Activated T-helper 2 cell treated with anti-CD3 and anti-CD28 coated beads, Interferon-gamma antibody, Interleukin-2, Interleukin-4, amounts not matched to agents 10 μg/mL and 5 μg/mL and 100 μg/mL, durations not matched to agents 14 hours and 24 hours and 36 hours (primary cell): ENCODE measurements at regions of chr16 and their contacts with region 1.

Region 1: GRCh38 chr16:14529010-14529669 is 100.9 kb downstream of the PARN start:
- DNase-seq: peak; percentile 36
- H3K4me3 Mint-ChIP-seq: no peak overlapping the region
- H3K27ac Mint-ChIP-seq: no peak overlapping the region
- H3K4me1 Mint-ChIP-seq: peaks cover 3% of the 10 kb centered on the region
- H3K27me3 Mint-ChIP-seq: no peaks in the 10 kb centered on the region

Region 2: DNA sequence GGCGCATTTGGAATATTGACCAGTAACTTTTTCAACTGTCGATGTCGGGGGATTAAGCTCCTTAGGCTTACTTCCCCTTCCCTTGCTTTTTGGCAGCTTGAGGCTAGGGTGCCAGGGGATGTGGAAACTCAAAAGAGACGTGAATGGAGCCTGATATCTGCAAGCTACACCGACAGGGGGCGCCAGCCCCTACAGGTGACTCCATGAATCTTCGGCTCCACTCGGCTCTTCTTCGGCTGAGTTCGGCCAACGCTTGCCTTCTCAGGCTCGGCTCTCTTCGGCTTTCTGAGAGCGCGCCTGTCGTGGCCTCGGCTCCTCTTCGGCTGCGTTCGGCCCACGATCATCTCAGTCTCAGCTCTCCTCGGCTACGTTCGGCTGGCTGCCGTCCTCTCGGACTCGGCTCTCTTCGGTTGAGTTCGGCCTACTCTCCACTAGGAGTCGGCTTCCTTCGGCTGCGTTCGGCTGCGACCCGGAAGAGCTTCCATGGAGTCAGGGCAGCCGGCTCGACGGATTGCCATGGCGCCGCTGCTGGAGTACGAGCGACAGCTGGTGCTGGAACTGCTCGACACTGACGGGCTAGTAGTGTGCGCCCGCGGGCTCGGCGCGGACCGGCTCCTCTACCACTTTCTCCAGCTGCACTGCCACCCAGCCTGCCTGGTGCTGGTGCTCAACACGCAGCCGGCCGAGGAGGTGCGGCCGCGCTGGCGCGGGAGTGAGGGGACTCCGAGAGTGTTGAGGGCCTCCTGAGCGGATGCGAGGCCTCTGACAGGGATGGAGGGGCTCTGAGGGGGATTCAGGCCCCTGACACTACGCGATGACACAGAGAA is 609.2 kb before region 1 on chr16 and contains the start of gene ERCC4:
- intact Hi-C with region 1: loop called (anchors 2 kb)
- DNase-seq: peak; percentile 99
- H3K4me3 Mint-ChIP-seq: peak within 1 kb of the TSS; percentile 99
- H3K27ac Mint-ChIP-seq: peak within 1 kb of the TSS; percentile 94
- H3K4me1 Mint-ChIP-seq: peaks cover 22% of the 10 kb centered on the region
- H3K27me3 Mint-ChIP-seq: peaks cover 7% of the 10 kb centered on the region
- total RNA-seq, gene ERCC4: 11.9 and 13.3 TPM in 2 replicates

Region 3: GRCh38 chr16:14249291-14250032 is 279.7 kb before region 1 on chr16:
- intact Hi-C with region 1: loop called (anchors 1 kb)
- DNase-seq: peak; percentile 16
- H3K4me3 Mint-ChIP-seq: no peak overlapping the region
- H3K27ac Mint-ChIP-seq: no peak overlapping the region
- H3K4me1 Mint-ChIP-seq: no peaks in the 10 kb centered on the region
- H3K27me3 Mint-ChIP-seq: no peaks in the 10 kb centered on the region

Region 4: DNA sequence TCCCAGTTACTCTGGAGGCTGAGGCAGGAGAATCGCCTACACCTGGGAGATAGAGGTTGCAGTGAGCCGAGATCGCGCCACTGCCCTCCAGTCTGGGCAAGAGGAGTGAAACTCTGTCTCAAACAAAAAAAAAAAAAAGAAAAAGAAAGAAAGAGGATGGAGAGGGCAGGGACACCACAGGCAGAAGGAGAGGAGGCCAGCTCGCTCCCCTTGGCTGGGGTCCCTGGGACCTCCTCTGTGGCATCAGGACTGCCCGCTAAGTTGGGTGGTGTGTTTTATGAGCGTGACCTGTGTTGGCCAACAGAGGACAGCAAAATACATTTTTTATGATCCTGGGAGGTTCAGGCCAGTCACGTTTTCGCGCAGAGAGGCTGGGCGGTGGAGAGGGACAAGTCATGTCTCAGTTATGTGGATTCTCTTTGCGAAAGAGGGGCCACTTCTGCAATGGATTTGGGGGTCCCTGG is 228.4 kb before region 1 on chr16:
- intact Hi-C with region 1: loop called (anchors 1 kb)
- DNase-seq: no peak
- H3K4me3 Mint-ChIP-seq: peak overlapping the region; percentile 79
- H3K27ac Mint-ChIP-seq: no peak overlapping the region
- H3K4me1 Mint-ChIP-seq: peaks cover 8% of the 10 kb centered on the region
- H3K27me3 Mint-ChIP-seq: peaks cover 38% of the 10 kb centered on the region

Region 5: GRCh38 chr16:14549789-14550153 is 20.6 kb after region 1 on chr16:
- intact Hi-C with region 1: no loop called
- DNase-seq: no peak
- H3K4me3 Mint-ChIP-seq: no peak overlapping the region
- H3K27ac Mint-ChIP-seq: no peak overlapping the region
- H3K4me1 Mint-ChIP-seq: no peaks in the 10 kb centered on the region
- H3K27me3 Mint-ChIP-seq: no peaks in the 10 kb centered on the region